ENCODE measurements at regions of chr1 and their contacts with region 1.

Region 1: GRCh38 chr1:61641578-61642336 is 83.2 kb downstream of the TM2D1 start:
- DNase-seq: peak; percentile 79 to 87 (median 81)
- H3K4me3 ChIP-seq: peak overlapping the region; percentile 21
- H3K27ac ChIP-seq: peak overlapping the region in 1 of 2 donors; percentile 64
- H3K4me1 ChIP-seq: peaks cover 18% of the 10 kb centered on the region
- H3K27me3 ChIP-seq: no peaks in the 10 kb centered on the region
- CTCF ChIP-seq: peak; percentile 46 to 71 (median 63)
- EP300 ChIP-seq: no peak
- POLR2A ChIP-seq: no peak

Region 2: DNA sequence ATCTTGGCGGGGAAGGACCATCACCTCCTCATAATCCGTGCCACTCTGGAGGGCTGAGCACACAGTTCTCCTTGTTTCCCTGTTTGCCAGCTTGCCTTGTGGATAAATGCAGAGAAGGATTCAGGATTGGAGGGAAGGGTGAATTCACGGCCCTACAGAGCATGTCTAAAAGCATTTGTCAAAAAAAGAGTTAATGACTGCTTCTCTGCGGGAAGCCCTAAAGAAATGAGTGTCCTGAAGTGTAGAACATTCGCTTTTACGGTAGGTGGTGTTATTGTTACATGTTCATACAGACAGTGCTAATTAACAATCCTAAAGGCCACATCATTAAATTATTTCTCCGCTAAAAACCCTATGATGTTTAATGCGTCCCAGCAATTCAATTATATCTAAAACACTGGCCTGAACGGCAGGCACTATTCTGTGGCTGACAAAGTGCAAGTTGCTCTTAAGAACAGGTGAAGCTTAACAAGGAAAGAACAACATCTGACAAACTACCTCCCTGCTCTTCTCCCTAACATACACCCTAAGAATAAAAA is 671.7 kb before region 1 on chr1:
- intact Hi-C with region 1: loop called in 1 of 4 experiments (anchors 10 kb)
- DNase-seq: no peak
- H3K4me3 ChIP-seq: no peak overlapping the region
- H3K27ac ChIP-seq: no peak overlapping the region
- H3K4me1 ChIP-seq: peaks cover 2% of the 10 kb centered on the region
- H3K27me3 ChIP-seq: no peaks in the 10 kb centered on the region
- CTCF ChIP-seq: peak in 2 of 3 donors; percentile 68 to 84
- EP300 ChIP-seq: no peak
- POLR2A ChIP-seq: no peak

Measured in ovary (tissue), 10 donors.